Right ventricle myocardium superior (tissue), 1 donor: ENCODE measurements at regions of chr5 and their contacts with region 1.

Region 1: DNA sequence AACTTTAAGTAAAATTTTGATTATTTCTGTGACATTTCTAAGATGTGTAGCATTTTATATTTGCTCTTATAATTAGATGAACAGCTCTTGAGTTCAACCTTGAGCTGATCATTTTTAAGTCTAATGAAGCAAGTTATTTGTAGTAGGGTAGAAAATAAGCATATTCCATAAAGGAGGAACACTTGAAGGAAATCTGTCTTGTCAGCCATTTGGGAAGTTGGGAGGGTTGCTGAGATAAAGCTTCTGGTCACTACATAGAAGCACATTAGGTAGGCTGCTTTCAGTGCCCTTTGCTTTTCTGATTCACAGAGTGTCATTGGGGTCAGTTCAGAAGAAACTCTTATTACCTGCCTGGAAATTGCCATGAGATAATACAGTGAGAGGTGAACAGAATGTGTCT is 44.1 kb downstream of the SEC24A start:
- DNase-seq: no peak
- ATAC-seq: no peak

Region 2: GRCh38 chr5:134794082-134794481 is 101.4 kb after region 1 on chr5:
- intact Hi-C with region 1: loop called (anchors 10 kb)
- DNase-seq: no peak
- ATAC-seq: no peak